Posterior cingulate gyrus (tissue), 11 donors: ENCODE measurements at regions of chr9 and their contacts with region 1.

Region 1: GRCh38 chr9:33721674-33722358 is 73.5 kb upstream of the PRSS3 start:
- DNase-seq: peak; percentile 63 to 97 (median 86)

Region 2: GRCh38 chr9:33623658-33624586 is 97.9 kb before region 1 on chr9:
- intact Hi-C with region 1: loop called (anchors 1 kb)
- DNase-seq: peak; percentile 39 to 93 (median 68)